Psoas muscle (tissue), 8 donors: ENCODE measurements at regions of chr17 and their contacts with region 1.

Region 1: GRCh38 chr17:44543213-44543904 is 13.9 kb upstream of the FZD2 start:
- DNase-seq: no peak
- ATAC-seq: no peak
- H3K4me3 ChIP-seq: no peak overlapping the region
- H3K27ac ChIP-seq: no peak overlapping the region
- H3K4me1 ChIP-seq: no peaks in the 10 kb centered on the region
- H3K27me3 ChIP-seq: peaks cover 0 to 39% (median 7%) of the 10 kb centered on the region in 3 donors
- CTCF ChIP-seq: no peak

Region 2: DNA sequence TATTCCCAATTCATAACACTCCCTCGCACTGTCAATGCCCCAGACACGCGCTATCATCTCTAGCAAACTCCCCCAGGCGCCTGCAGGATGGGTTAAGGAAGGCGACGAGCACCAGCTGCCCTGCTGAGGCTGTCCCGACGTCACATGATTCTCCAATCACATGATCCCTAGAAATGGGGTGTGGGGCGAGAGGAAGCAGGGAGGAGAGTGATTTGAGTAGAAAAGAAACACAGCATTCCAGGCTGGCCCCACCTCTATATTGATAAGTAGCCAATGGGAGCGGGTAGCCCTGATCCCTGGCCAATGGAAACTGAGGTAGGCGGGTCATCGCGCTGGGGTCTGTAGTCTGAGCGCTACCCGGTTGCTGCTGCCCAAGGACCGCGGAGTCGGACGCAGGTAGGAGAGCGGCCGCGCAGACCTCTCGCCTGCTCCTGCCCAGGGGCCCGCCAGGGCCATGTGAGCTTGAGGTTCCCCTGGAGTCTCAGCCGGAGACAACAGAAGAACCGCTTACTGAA is 198.4 kb before region 1 on chr17 and contains the start of gene GRN:
- intact Hi-C with region 1: no loop called
- DNase-seq: peak; percentile 89 to 93
- ATAC-seq: peak; percentile 97 to 99 (median 98)
- H3K4me3 ChIP-seq: peak within 1 kb of the TSS; percentile 84
- H3K27ac ChIP-seq: peak within 1 kb of the TSS; percentile 86
- H3K4me1 ChIP-seq: peaks cover 5% of the 10 kb centered on the region
- H3K27me3 ChIP-seq: no peaks in the 10 kb centered on the region
- CTCF ChIP-seq: no peak
- total RNA-seq, gene GRN: 37.2 to 61.0 (median 58.6) TPM

Region 3: GRCh38 chr17:44587339-44587738 is 44.0 kb after region 1 on chr17:
- intact Hi-C with region 1: no loop called
- DNase-seq: peak in 1 of 2 donors; percentile 17
- ATAC-seq: peak in 3 of 4 donors; percentile 53 to 69 (median 60)
- H3K4me3 ChIP-seq: no peak overlapping the region
- H3K27ac ChIP-seq: no peak overlapping the region
- H3K4me1 ChIP-seq: no peaks in the 10 kb centered on the region
- H3K27me3 ChIP-seq: peaks cover 0 to 2% (median 0%) of the 10 kb centered on the region in 3 donors
- CTCF ChIP-seq: no peak

Region 4: GRCh38 chr17:44850612-44851011 is 307.3 kb after region 1 on chr17:
- intact Hi-C with region 1: loop called in 1 of 2 experiments (anchors 10 kb)
- DNase-seq: peak in 1 of 2 donors; percentile 24
- ATAC-seq: peak in 1 of 4 donors; percentile 41
- H3K4me3 ChIP-seq: no peak overlapping the region
- H3K27ac ChIP-seq: peak overlapping the region; percentile 24
- H3K4me1 ChIP-seq: no peaks in the 10 kb centered on the region
- H3K27me3 ChIP-seq: no peaks in the 10 kb centered on the region
- CTCF ChIP-seq: no peak